Caco-2 (cell line): ENCODE measurements at regions of chr10 and their contacts with region 1.

Region 1: GRCh38 chr10:85413570-85413969 is 953.0 kb downstream of the GRID1 start:
- DNase-seq: no peak
- H3K4me3 ChIP-seq: no peak overlapping the region
- H3K4me3 Mint-ChIP-seq: peak overlapping the region; percentile 22
- H3K27ac Mint-ChIP-seq: no peak overlapping the region
- H3K4me1 ChIP-seq: peaks cover 38% of the 10 kb centered on the region
- H3K4me1 Mint-ChIP-seq: peaks cover 13% of the 10 kb centered on the region
- H3K27me3 ChIP-seq: no peaks in the 10 kb centered on the region
- H3K27me3 Mint-ChIP-seq: no peaks in the 10 kb centered on the region
- CTCF ChIP-seq: no peak

Region 2: GRCh38 chr10:85280014-85280413 is 133.6 kb before region 1 on chr10:
- CTCF ChIA-PET with region 1: no interaction called
- POLR2A ChIA-PET with region 1: no interaction called
- intact Hi-C with region 1: loop called (anchors 5 kb)
- DNase-seq: peak; percentile 57 to 68
- H3K4me3 ChIP-seq: no peak overlapping the region
- H3K4me3 Mint-ChIP-seq: no peak overlapping the region
- H3K27ac Mint-ChIP-seq: peak overlapping the region; percentile 56
- H3K4me1 ChIP-seq: peaks cover 24% of the 10 kb centered on the region
- H3K4me1 Mint-ChIP-seq: no peaks in the 10 kb centered on the region
- H3K27me3 ChIP-seq: no peaks in the 10 kb centered on the region
- H3K27me3 Mint-ChIP-seq: no peaks in the 10 kb centered on the region
- CTCF ChIP-seq: no peak

Region 3: DNA sequence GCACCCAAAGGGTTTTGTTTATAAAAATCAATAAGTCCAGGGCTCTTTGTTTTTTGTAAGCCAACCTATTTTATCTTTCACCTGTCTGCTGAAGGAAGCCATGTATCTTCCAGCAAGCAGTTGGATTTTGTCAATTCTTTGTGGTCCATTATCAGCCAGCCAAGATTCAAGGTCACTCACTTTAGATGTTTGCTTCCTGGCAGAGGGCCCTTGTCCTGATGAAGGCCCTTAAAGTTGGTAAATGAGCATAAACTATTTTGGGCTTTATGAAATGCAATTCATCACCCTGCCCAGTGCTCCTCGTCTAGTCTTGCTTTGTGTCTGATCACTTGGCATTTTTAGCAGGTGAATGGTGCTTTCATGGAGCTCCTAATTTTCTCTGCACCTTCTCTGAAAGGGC is 51.2 kb before region 1 on chr10:
- CTCF ChIA-PET with region 1: no interaction called
- POLR2A ChIA-PET with region 1: no interaction called
- intact Hi-C with region 1: no loop called
- DNase-seq: no peak
- H3K4me3 ChIP-seq: no peak overlapping the region
- H3K4me3 Mint-ChIP-seq: no peak overlapping the region
- H3K27ac Mint-ChIP-seq: no peak overlapping the region
- H3K4me1 ChIP-seq: no peaks in the 10 kb centered on the region
- H3K4me1 Mint-ChIP-seq: no peaks in the 10 kb centered on the region
- H3K27me3 ChIP-seq: no peaks in the 10 kb centered on the region
- H3K27me3 Mint-ChIP-seq: no peaks in the 10 kb centered on the region
- CTCF ChIP-seq: no peak